ENCODE measurements at regions of chr14 and their contacts with region 1.

Region 1: GRCh38 chr14:101957406-101958234 is 6.8 kb upstream of the DYNC1H1 start:
- DNase-seq: no peak
- H3K4me3 ChIP-seq: no peak overlapping the region
- H3K4me3 Mint-ChIP-seq: no peak overlapping the region
- H3K27ac ChIP-seq: no peak overlapping the region
- H3K27ac Mint-ChIP-seq: no peak overlapping the region
- H3K4me1 ChIP-seq: peaks cover 0 to 3% of the 10 kb centered on the region in 2 donors
- H3K4me1 Mint-ChIP-seq: peaks cover 7% of the 10 kb centered on the region
- H3K27me3 ChIP-seq: no peaks in the 10 kb centered on the region
- H3K27me3 Mint-ChIP-seq: peaks cover 2 to 5% (median 3%) of the 10 kb centered on the region in 3 donors
- CTCF ChIP-seq: no peak

Region 2: DNA sequence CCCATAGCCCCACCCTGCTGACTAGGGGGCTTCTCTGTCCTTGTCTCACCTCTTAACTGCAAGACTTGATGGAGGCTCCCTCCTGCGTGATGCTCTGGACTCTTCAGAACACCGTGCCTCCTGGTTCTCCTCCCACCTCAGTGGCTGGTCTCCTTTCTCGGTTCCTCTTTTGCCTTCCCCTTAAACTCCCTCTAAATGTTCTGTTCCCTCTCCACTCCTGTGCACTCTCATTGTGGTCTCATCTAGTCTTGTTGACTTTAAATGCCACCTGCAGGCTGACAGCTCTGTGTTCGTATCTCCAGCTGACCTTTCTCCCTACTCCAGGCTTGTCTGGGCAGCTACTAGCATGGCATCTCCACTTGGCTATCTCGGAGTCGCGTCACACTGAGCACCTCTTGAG is 35.1 kb after region 1 on chr14:
- intact Hi-C with region 1: loop called in 1 of 2 experiments (anchors 5 kb)
- DNase-seq: peak; percentile 30 to 49 (median 42)
- H3K4me3 ChIP-seq: no peak overlapping the region
- H3K4me3 Mint-ChIP-seq: no peak overlapping the region
- H3K27ac ChIP-seq: peak overlapping the region; percentile 4 to 17
- H3K27ac Mint-ChIP-seq: peak overlapping the region in 6 of 7 donors; percentile 40 to 72 (median 53)
- H3K4me1 ChIP-seq: peaks cover 2 to 8% of the 10 kb centered on the region in 2 donors
- H3K4me1 Mint-ChIP-seq: peaks cover 10% of the 10 kb centered on the region
- H3K27me3 ChIP-seq: no peaks in the 10 kb centered on the region
- H3K27me3 Mint-ChIP-seq: no peaks in the 10 kb centered on the region
- CTCF ChIP-seq: no peak

Region 3: GRCh38 chr14:102028421-102029172 is 71.0 kb after region 1 on chr14:
- intact Hi-C with region 1: no loop called
- DNase-seq: no peak
- H3K4me3 ChIP-seq: no peak overlapping the region
- H3K4me3 Mint-ChIP-seq: no peak overlapping the region
- H3K27ac ChIP-seq: no peak overlapping the region
- H3K27ac Mint-ChIP-seq: peak overlapping the region in 1 of 7 donors; percentile 22
- H3K4me1 ChIP-seq: no peaks in the 10 kb centered on the region
- H3K4me1 Mint-ChIP-seq: no peaks in the 10 kb centered on the region
- H3K27me3 ChIP-seq: no peaks in the 10 kb centered on the region
- H3K27me3 Mint-ChIP-seq: peaks cover 0 to 2% (median 0%) of the 10 kb centered on the region in 3 donors
- CTCF ChIP-seq: no peak

Measured in CD14-positive monocyte (primary cell).